SK-N-SH (cell line): ENCODE measurements at regions of chr10 and their contacts with region 1.

Region 1: DNA sequence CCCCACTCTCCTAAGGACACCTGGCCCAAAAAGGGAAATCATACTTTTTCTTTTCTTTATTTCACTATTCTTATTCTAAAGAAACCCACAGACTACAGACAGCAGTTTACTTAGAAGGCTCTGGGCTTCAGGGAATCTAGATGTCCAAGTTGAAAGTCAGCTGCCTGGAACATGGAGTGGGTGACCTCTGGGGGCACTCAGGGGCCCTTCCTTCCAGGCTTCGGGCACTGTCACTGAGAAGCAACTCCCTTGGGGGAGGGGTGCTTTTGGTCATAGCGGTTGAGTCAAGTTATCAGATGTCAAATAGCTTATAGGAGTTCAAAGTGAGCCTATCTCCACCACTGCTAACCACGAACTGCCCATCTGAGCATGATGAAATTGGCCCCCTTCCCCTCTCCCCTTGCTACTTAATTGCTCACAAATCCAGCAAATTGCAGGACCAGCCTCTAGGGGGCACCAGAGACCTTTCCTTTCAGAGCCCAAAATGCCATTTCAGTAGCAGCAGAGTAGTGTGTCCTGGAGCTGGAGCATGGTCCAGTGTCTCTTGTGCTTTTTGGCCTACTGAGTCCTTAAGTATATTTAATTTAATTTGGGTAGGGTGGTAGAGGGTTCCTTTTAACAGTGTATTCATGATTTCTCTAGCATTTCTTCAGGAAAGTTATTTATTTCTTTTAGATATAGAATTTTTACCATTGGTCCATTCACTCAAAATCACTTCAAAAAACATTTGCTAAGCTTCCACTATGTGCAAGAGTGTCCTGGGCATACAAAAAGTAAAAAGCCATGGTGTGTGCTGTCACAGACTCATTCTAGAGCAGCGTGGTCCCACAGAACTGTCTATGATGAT is 463.8 kb downstream of the KCNMA1 start:
- DNase-seq: peak; percentile 66
- H3K4me3 ChIP-seq: no peak overlapping the region; a peak in 1 of 4 replicates
- H3K27ac ChIP-seq: no peak overlapping the region
- H3K4me1 ChIP-seq: peaks cover 0 to 2% of the 10 kb centered on the region in 2 experiments; a peak in 3 of 4 replicates
- H3K27me3 ChIP-seq: no peaks in the 10 kb centered on the region
- CTCF ChIP-seq: peak; percentile 95
- EP300 ChIP-seq: no peak
- RAD21 ChIP-seq: peak; percentile 97

Region 2: DNA sequence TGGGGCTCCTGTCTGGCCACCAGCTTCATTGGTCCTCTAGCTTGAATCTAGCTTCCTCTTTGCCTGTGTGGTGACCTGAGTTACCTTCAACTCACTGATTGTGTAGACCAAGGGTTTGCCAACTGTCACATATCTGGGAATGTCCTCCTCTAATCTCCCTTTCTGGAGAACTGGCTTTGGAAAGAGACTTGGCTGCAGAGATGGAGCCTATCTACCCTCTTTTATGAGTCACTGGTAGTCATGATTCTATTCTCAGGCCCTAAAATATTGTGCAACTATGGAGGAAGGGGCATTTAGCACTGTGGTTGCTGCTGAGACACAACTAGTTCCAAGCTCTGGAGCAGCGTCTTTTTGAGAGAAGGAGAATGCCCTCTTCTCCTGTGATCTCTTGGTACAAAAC is 227.6 kb before region 1 on chr10:
- CTCF ChIA-PET with region 1: no interaction called
- POLR2A ChIA-PET with region 1: no interaction called
- DNase-seq: no peak
- H3K4me3 ChIP-seq: no peak overlapping the region
- H3K27ac ChIP-seq: no peak overlapping the region
- H3K4me1 ChIP-seq: peaks cover 0 to 22% of the 10 kb centered on the region in 2 experiments; a peak in 1 of 4 replicates
- H3K27me3 ChIP-seq: no peaks in the 10 kb centered on the region
- CTCF ChIP-seq: no peak
- EP300 ChIP-seq: no peak
- RAD21 ChIP-seq: no peak

Region 3: DNA sequence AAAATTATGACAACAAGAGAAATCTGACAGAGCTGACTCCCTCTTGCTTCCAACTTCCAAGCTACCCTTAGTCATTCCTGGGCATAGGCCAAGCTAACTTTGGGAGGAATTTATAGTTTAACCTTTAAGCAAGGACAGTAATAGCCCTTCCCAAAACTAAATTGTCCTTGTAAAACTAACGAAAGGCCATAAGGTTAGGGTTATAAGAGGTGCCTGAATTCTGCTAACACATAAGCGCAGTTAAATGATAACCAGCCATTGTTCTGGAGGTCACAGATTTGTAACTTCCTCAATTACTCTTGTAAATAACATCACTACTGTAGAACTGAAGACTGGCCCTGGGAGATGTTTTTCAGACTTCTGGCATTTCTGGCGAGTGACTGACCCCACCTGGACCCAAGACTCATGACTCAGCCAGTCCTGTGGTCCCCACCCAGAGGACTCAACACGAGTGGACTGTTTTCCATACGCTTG is 17.4 kb before region 1 on chr10:
- CTCF ChIA-PET with region 1: interaction called, 86 read pairs
- POLR2A ChIA-PET with region 1: no interaction called
- DNase-seq: no peak
- H3K4me3 ChIP-seq: no peak overlapping the region
- H3K27ac ChIP-seq: peak overlapping the region; percentile 67 to 83; a peak in 3 of 4 replicates
- H3K4me1 ChIP-seq: peaks cover 16 to 17% of the 10 kb centered on the region in 2 experiments
- H3K27me3 ChIP-seq: no peaks in the 10 kb centered on the region
- CTCF ChIP-seq: no peak
- EP300 ChIP-seq: peak in 1 of 2 experiments; percentile 87; a peak in 3 of 4 replicates
- RAD21 ChIP-seq: no peak

Region 4: DNA sequence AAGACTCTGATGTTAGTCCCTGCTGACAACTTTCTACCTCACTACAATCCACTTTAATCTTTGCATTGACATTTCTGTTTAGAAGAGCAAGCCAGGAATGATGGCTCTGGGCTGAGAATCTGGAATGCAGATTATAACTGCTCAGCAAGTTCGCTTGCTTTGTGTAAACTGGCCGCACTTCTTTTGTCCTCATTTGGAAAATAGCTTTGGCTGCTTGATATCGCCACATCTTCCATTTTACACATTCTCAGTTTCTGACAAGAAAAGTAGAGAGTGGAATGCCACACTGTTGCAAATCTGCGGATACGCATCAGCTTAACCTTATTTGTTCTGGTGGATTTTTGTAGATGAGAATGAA is 34.0 kb after region 1 on chr10:
- CTCF ChIA-PET with region 1: interaction called, 12 read pairs
- POLR2A ChIA-PET with region 1: no interaction called
- DNase-seq: no peak
- H3K4me3 ChIP-seq: no peak overlapping the region
- H3K27ac ChIP-seq: no peak overlapping the region
- H3K4me1 ChIP-seq: no peaks in the 10 kb centered on the region
- H3K27me3 ChIP-seq: no peaks in the 10 kb centered on the region
- CTCF ChIP-seq: no peak
- EP300 ChIP-seq: no peak
- RAD21 ChIP-seq: no peak

Region 5: GRCh38 chr10:77391605-77392235 is 217.9 kb after region 1 on chr10:
- CTCF ChIA-PET with region 1: interaction called, 47 read pairs
- POLR2A ChIA-PET with region 1: no interaction called
- DNase-seq: peak; percentile 66
- H3K4me3 ChIP-seq: no peak overlapping the region
- H3K27ac ChIP-seq: peak overlapping the region; percentile 78 to 95
- H3K4me1 ChIP-seq: peaks cover 49 to 57% of the 10 kb centered on the region in 2 experiments
- H3K27me3 ChIP-seq: no peaks in the 10 kb centered on the region
- CTCF ChIP-seq: peak; percentile 75
- EP300 ChIP-seq: no peak; a peak in 1 of 4 replicates
- RAD21 ChIP-seq: peak; percentile 78

Region 6: DNA sequence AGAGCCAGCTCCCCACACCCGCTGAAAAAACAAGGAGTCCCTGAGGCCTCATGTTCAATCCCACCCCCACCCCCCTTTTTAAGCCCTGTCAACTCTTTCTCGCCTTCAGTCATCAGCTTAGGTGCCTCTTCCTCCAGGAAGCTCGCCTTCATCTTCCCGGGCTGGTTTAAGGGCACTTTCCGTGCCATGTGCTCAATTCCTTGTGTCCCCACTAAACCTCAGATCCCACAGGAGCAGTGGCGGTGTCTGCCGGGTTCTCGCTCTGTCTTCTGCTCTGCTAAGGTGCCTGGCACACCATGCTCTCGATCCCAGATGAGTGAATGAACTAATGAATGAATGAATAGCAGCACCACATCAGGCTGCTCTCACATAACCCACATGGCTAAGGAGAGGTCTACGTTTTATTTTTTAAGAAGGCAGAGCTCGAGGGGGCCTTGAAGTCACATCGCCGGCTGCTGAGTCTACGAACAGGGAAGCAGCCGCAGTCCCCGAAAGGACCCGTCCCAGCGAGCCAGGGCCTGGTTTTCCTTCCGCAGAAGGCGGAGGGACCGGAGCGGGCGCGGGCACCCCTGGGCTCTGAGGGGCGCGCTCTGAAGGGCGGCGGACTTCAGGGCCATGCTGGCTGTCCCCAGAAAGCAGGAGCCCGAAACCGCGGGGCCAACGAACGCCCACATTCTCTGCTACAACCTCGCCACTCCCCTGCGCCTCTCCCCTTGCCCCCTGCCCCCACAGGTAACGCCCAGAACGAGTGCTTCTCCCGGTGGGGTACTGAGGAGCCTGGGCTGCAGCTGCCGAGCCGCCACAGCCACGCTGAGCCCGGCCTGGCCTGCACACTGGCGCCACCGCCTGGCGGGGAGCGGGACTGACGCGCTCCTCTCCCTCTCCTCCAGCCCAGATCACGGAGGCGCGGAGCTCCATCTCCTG is 537.2 kb after region 1 on chr10:
- CTCF ChIA-PET with region 1: interaction called, 50 read pairs
- POLR2A ChIA-PET with region 1: no interaction called
- DNase-seq: peak; percentile 90
- H3K4me3 ChIP-seq: no peak overlapping the region; a peak in 1 of 4 replicates
- H3K27ac ChIP-seq: no peak overlapping the region
- H3K4me1 ChIP-seq: peaks cover 4 to 8% of the 10 kb centered on the region in 2 experiments; a peak in 1 of 4 replicates
- H3K27me3 ChIP-seq: no peaks in the 10 kb centered on the region
- CTCF ChIP-seq: peak; percentile 86
- EP300 ChIP-seq: no peak
- RAD21 ChIP-seq: peak; percentile 75